ENCODE measurements at regions of chr13 and their contacts with region 1.

Region 1: DNA sequence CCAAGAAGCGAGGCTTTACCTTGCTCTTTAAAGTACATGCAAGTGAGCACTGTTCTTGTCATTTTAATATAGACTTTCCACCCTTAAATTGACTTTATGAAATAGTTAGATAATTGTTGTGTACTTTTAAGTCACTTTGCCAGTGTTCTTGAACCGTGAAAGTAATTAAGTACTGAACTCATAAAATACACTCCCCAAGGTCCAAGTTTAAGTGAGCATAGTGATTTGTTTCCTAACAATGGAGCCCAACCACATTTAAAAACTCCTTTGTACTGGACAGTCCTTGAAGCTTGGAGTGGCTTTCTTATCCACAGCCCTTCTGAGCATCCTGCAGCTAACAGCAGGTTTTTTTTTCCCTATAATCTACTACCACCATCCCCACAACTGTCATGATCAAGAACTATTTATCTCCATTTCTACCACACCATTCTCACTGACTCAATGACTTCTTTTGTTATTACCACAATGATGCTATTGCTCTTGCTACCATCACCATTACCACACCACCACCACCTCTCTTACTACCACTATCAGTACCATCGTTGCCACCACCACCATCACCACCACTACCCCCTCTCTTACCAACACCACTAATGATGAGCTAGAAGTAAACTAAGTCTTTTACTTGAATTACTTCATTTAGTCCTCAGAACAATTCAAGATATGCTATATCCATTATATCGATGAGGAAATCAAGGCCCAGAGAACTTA is 452.6 kb downstream of the DIAPH3 start:
- DNase-seq: no peak
- H3K4me3 ChIP-seq: no peak overlapping the region
- H3K27me3 ChIP-seq: no peaks in the 10 kb centered on the region
- CTCF ChIP-seq: no peak

Region 2: DNA sequence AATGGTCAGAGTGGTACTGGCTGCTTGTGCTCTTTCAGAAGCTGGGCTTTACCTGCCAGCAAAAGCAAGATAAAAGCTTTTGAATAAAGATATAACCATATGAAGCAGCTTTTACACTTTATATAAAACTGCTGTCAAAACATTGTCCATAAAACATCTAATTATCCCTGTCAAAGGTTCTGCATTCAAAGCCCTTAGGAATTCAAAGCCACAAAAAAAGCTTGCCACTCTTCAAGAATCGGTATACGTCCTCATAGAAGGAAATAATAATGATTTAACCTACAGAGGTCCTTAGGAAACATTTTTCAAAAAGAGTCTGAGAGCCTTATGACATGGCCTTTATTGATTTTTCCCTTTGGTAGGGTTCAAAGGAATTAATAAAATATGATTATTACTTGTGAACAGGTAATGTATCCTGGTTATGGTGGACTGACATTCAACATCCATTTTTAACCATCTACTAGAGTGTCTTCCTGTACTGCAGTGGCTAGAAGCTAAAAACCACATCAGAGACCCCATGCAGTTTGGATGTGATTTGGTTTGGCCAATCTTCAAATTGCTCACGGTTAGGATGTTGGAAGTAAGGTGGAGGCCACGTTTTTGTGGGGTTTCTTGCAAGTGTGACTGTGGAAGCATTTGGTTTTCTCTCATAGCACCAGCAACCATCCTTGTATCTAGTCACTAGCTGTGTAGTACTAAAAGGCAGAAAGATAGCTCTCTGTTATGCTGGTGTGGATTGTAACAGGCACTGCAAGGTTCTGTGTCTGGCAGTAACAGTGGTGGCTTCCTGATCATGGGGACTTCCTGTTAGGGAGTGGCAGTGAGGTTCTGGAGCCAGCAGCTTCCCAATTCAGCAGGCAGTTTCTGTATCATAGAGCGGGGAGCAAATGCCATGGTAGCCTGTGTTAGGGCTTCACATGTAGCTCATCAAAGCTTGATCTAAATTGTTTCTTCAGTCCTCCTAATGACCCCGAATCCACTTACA is 11.1 kb after region 1 on chr13:
- CTCF ChIA-PET with region 1: interaction called, 3 read pairs
- POLR2A ChIA-PET with region 1: interaction called, 24 read pairs
- DNase-seq: no peak
- H3K4me3 ChIP-seq: no peak overlapping the region
- H3K27me3 ChIP-seq: no peaks in the 10 kb centered on the region
- CTCF ChIP-seq: no peak

Measured in BJ (cell line).